ENCODE measurements at regions of chr11 and their contacts with region 1.

Region 1: GRCh38 chr11:103779054-103779453 is 257.4 kb upstream of the DDI1 start:
- DNase-seq: no peak
- H3K4me3 ChIP-seq: no peak overlapping the region
- H3K4me3 Mint-ChIP-seq: no peak overlapping the region
- H3K27ac Mint-ChIP-seq: no peak overlapping the region
- H3K4me1 ChIP-seq: no peaks in the 10 kb centered on the region
- H3K4me1 Mint-ChIP-seq: no peaks in the 10 kb centered on the region
- H3K27me3 ChIP-seq: no peaks in the 10 kb centered on the region
- H3K27me3 Mint-ChIP-seq: no peaks in the 10 kb centered on the region
- CTCF ChIP-seq: no peak

Region 2: DNA sequence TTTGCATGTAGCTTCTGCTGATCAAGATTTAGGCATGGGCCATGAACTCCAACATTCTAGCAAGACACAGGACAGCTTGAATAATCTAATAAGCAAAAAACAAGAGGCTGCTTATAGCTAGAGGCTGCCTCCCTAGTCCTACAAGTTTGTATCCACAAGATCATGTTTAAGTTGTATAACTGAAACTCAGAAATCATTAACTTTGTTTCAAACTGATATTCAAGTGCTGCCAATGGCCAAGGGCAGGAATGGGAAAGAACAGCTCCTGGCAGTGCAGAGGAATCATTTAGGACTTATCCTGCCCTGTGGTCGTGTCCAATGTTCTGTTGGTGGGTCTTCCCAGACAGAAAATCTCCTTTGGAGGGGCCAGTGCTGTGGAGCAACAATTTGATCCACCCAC is 47.8 kb after region 1 on chr11:
- CTCF ChIA-PET with region 1: no interaction called
- POLR2A ChIA-PET with region 1: no interaction called
- intact Hi-C with region 1: loop called (anchors 5 kb)
- DNase-seq: no peak
- H3K4me3 ChIP-seq: no peak overlapping the region
- H3K4me3 Mint-ChIP-seq: no peak overlapping the region
- H3K27ac Mint-ChIP-seq: no peak overlapping the region
- H3K4me1 ChIP-seq: peaks cover 9% of the 10 kb centered on the region
- H3K4me1 Mint-ChIP-seq: no peaks in the 10 kb centered on the region
- H3K27me3 ChIP-seq: no peaks in the 10 kb centered on the region
- H3K27me3 Mint-ChIP-seq: no peaks in the 10 kb centered on the region
- CTCF ChIP-seq: no peak

Region 3: DNA sequence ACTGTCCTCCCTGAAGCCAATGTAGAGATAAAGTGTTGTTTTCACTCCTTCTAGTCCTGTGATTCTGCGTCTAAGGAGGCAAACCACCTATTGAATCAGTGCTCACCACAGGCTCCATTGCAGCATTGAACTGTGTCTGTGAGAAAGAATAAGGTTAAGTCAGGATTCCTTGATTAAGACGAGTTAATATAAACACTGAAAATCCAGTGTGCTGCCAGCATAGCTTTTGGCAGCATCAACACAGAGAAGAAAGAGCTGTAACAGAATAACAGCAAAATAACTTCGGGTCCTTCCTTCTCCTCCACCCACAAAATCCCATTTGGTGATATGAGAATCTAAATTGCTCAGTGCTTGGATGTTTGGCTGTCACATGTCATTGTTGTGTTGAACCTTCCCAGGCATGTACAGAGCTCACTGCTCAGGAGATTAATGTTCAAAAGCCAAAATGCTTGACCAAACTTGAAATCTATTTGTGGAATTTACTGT is 72.2 kb after region 1 on chr11:
- CTCF ChIA-PET with region 1: no interaction called
- POLR2A ChIA-PET with region 1: no interaction called
- intact Hi-C with region 1: no loop called
- DNase-seq: no peak
- H3K4me3 ChIP-seq: no peak overlapping the region
- H3K4me3 Mint-ChIP-seq: no peak overlapping the region
- H3K27ac Mint-ChIP-seq: no peak overlapping the region
- H3K4me1 ChIP-seq: peaks cover 10% of the 10 kb centered on the region; the same call in 1 of the 2 replicates
- H3K4me1 Mint-ChIP-seq: no peaks in the 10 kb centered on the region
- H3K27me3 ChIP-seq: no peaks in the 10 kb centered on the region
- H3K27me3 Mint-ChIP-seq: no peaks in the 10 kb centered on the region
- CTCF ChIP-seq: no peak

Measured in Caco-2 (cell line).